ENCODE measurements at regions of chr3 and their contacts with region 1.

Region 1: DNA sequence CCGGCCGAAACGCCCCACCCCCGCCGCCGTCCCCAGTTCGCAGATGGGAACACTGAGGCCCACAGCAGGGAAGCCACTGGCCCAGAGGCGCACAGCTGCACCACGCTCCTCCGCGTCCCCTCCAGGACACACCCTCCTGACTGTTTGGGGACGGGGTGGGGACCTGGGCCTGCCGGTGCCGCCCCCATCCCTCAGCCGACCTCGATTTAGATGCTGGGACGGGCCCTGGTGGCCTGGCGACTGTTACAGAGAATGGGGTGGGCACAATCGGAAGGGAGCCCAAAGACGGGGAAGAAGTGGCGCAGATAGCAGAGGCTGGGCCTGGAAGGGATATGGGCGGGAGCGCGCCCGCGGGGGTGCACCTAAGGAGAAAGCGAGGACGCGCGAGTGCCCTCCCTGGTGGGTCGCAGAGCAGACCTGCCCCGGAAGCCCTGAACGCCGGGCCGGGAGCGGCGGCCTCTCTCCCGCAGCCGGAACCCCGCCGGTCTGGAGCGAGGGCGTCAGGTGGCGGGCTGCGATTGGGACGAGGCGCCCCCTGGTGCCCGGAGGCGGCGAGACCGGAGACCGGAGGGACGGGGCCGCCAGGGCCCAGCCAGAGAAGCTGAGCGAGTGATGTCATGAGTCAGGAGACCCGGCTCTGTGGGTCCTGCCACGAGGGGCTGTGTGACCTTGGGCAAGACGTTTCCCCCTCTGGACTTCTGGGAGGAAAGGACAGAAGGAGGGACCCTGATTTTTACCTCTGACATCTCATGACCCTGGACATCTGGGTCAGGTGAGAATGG is 78.4 kb downstream of the IQSEC1 start:
- DNase-seq: peak; percentile 65 to 91
- H3K4me3 ChIP-seq: peak overlapping the region; percentile 79
- H3K27ac ChIP-seq: peak overlapping the region; percentile 50
- H3K4me1 ChIP-seq: peaks cover 71% of the 10 kb centered on the region
- H3K27me3 ChIP-seq: no peaks in the 10 kb centered on the region
- CTCF ChIP-seq: peak; percentile 90

Region 2: GRCh38 chr3:12405432-12406272 is 589.1 kb before region 1 on chr3:
- CTCF ChIA-PET with region 1: no interaction called
- POLR2A ChIA-PET with region 1: no interaction called
- intact Hi-C with region 1: no loop called
- DNase-seq: peak; percentile 92 to 97
- H3K4me3 ChIP-seq: peak overlapping the region; percentile 20; the same call in 1 of the 2 replicates
- H3K27ac ChIP-seq: peak overlapping the region; percentile 96
- H3K4me1 ChIP-seq: peaks cover 51% of the 10 kb centered on the region
- H3K27me3 ChIP-seq: no peaks in the 10 kb centered on the region
- CTCF ChIP-seq: no peak

Region 3: GRCh38 chr3:12891985-12892839 is 102.6 kb before region 1 on chr3:
- CTCF ChIA-PET with region 1: no interaction called
- POLR2A ChIA-PET with region 1: no interaction called
- intact Hi-C with region 1: loop called (anchors 10 kb)
- DNase-seq: peak in 1 of 2 experiments; percentile 47
- H3K4me3 ChIP-seq: no peak overlapping the region
- H3K27ac ChIP-seq: no peak overlapping the region
- H3K4me1 ChIP-seq: no peaks in the 10 kb centered on the region
- H3K27me3 ChIP-seq: peaks cover 34% of the 10 kb centered on the region; the same call in 1 of the 2 replicates
- CTCF ChIP-seq: peak; percentile 96

Region 4: GRCh38 chr3:12967606-12968351 is 27.0 kb before region 1 on chr3:
- CTCF ChIA-PET with region 1: no interaction called
- POLR2A ChIA-PET with region 1: interaction called, 11 read pairs
- intact Hi-C with region 1: no loop called
- DNase-seq: peak; percentile 40 to 87
- H3K4me3 ChIP-seq: peak overlapping the region; percentile 96
- H3K27ac ChIP-seq: no peak overlapping the region
- H3K4me1 ChIP-seq: peaks cover 14% of the 10 kb centered on the region
- H3K27me3 ChIP-seq: no peaks in the 10 kb centered on the region
- CTCF ChIP-seq: no peak

Region 5: DNA sequence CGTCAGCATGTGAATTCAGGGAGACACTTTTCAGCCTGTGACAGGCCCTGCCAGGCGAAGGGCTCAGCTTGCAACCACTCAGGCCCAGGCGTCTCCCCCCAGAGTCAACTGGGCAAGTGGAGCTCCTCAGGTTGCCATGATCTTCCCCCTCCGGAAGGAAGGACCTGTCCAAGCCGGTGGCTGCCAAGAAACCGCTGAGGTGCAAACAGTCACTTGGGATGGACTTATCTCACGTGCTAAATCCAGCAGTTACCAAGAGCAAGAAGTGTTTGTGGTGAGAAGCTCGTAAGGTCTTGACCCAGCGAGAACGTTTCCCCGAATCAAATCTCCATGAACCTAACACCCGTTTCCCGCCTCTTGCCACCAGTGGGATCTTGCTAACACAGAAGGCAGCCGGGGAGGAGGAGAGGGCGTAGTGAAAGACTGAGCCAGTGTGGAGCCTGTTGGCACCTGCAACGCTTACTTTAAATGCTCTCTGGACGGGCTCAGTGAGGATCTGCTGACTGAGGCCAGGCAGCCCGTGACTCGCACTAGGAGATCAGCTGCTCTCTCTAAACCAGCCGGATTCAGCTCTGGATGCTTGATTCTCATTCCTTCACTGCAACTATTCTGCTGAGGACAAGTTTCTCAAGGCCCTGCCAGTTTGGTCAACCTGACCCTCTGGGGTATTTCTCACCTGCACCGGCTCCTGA is 39.5 kb after region 1 on chr3:
- CTCF ChIA-PET with region 1: no interaction called
- POLR2A ChIA-PET with region 1: no interaction called
- intact Hi-C with region 1: no loop called
- DNase-seq: no peak
- H3K4me3 ChIP-seq: no peak overlapping the region
- H3K27ac ChIP-seq: no peak overlapping the region
- H3K4me1 ChIP-seq: no peaks in the 10 kb centered on the region
- H3K27me3 ChIP-seq: no peaks in the 10 kb centered on the region
- CTCF ChIP-seq: no peak

Region 6: DNA sequence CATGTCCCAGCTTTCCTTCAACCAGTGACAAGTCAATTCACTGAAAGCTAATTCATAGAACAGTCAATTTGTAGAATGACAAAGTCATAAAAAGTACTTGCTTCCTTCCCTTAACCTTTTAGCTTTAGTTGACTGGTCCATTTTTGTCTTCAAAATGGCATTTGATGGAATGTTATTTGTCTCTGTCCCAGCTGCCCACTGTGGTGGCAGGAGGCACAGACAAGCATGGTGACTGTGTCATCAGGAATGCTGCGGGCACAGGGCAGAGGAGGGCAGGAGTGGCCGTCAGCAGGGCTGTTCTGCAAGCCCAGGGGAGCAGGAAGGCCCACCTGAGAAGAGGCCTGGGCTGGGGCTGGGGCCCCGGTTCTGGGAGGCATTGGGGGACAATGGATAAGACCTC is 68.4 kb after region 1 on chr3:
- CTCF ChIA-PET with region 1: no interaction called
- POLR2A ChIA-PET with region 1: no interaction called
- intact Hi-C with region 1: loop called (anchors 5 kb)
- DNase-seq: peak; percentile 77 to 80
- H3K4me3 ChIP-seq: no peak overlapping the region
- H3K27ac ChIP-seq: no peak overlapping the region
- H3K4me1 ChIP-seq: peaks cover 20% of the 10 kb centered on the region
- H3K27me3 ChIP-seq: no peaks in the 10 kb centered on the region
- CTCF ChIP-seq: no peak

Region 7: GRCh38 chr3:13215940-13216546 is 221.2 kb after region 1 on chr3:
- CTCF ChIA-PET with region 1: no interaction called
- POLR2A ChIA-PET with region 1: no interaction called
- intact Hi-C with region 1: loop called (anchors 5 kb)
- DNase-seq: peak; percentile 80 to 95
- H3K4me3 ChIP-seq: no peak overlapping the region
- H3K27ac ChIP-seq: peak overlapping the region; percentile 55
- H3K4me1 ChIP-seq: peaks cover 55% of the 10 kb centered on the region
- H3K27me3 ChIP-seq: no peaks in the 10 kb centered on the region
- CTCF ChIP-seq: no peak

Region 8: GRCh38 chr3:13636874-13637273 is 642.1 kb after region 1 on chr3:
- CTCF ChIA-PET with region 1: interaction called, 13 read pairs
- POLR2A ChIA-PET with region 1: no interaction called
- intact Hi-C with region 1: no loop called
- DNase-seq: no peak
- H3K4me3 ChIP-seq: no peak overlapping the region
- H3K27ac ChIP-seq: no peak overlapping the region
- H3K4me1 ChIP-seq: no peaks in the 10 kb centered on the region
- H3K27me3 ChIP-seq: peaks cover 13% of the 10 kb centered on the region
- CTCF ChIP-seq: no peak